ENCODE measurements at regions of chr10 and their contacts with region 1.

Region 1: GRCh38 chr10:69957886-69958555 is 94.6 kb upstream of the MACROH2A2 start:
- DNase-seq: peak; percentile 73
- H3K4me3 ChIP-seq: no peak overlapping the region
- H3K27ac ChIP-seq: no peak overlapping the region
- H3K4me1 ChIP-seq: peaks cover 0 to 5% of the 10 kb centered on the region in 2 experiments; a peak in 1 of 4 replicates
- H3K27me3 ChIP-seq: no peaks in the 10 kb centered on the region
- CTCF ChIP-seq: peak; percentile 81
- EP300 ChIP-seq: no peak
- RAD21 ChIP-seq: peak; percentile 69

Region 2: DNA sequence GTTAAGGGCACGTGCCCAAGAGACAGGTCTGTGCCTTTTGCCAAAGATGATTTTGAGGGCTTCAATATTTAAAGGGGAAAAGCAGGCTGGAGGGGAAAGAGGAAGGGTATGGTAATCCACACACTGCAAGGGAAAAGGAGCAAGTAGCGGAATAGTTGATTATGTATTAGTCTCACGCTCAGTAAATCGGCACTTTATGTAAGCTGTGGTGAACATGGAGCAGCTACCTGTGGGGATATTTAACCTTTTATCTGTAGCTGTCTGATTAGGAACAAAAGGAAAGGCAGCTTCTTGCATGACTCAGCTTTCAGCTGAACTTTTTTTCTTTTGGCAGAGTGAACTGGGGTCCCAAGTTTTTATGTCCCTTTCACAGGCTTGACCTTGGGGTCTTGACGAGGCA is 32.9 kb before region 1 on chr10:
- CTCF ChIA-PET with region 1: interaction called, 15 read pairs
- POLR2A ChIA-PET with region 1: no interaction called
- DNase-seq: no peak
- H3K4me3 ChIP-seq: no peak overlapping the region
- H3K27ac ChIP-seq: no peak overlapping the region
- H3K4me1 ChIP-seq: no peaks in the 10 kb centered on the region
- H3K27me3 ChIP-seq: no peaks in the 10 kb centered on the region
- CTCF ChIP-seq: no peak
- EP300 ChIP-seq: no peak
- RAD21 ChIP-seq: no peak

Region 3: DNA sequence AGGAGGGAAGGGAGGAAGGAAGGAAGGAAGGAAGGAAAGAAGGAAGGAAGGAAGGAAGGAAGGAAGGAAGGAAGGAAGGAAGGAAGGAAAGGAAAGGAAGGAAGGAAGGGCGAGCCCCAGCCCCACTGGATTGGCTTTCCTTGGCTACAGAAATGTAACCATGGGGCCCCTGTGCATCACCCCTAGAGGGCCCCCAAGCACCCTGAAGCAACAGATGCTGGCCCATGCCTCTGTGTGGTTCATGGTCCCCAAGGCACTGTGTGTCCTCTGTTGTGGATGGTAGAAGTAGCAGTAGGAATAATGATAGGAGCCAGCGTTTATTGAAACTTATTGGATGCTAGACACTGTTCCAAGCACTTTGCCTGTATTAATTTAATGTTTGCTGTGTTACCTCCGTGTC is 21.9 kb before region 1 on chr10:
- CTCF ChIA-PET with region 1: interaction called, 30 read pairs
- POLR2A ChIA-PET with region 1: no interaction called
- DNase-seq: no peak
- H3K4me3 ChIP-seq: no peak overlapping the region
- H3K27ac ChIP-seq: no peak overlapping the region
- H3K4me1 ChIP-seq: no peaks in the 10 kb centered on the region
- H3K27me3 ChIP-seq: no peaks in the 10 kb centered on the region
- CTCF ChIP-seq: no peak
- EP300 ChIP-seq: no peak
- RAD21 ChIP-seq: peak; percentile 23

Region 4: DNA sequence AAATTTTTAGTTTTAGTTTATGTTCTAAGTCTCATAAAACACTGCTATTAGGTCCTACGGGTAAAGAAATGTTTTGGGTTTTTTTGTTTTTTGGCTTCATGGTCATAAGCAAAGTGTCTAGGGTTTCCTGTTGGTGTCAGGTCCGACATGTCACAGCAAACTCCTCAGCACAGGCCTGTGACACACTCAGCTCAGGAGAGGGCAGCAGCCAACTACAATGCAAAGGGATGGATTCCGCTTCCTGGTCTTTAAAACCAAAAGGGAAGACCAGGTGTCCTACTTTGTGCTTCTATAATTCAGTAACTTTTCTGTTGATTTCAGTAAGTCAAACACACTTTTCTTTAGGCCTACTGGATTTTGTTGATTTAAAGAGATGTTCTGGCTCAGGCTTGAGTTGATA is 10.8 kb after region 1 on chr10:
- CTCF ChIA-PET with region 1: interaction called, 85 read pairs
- POLR2A ChIA-PET with region 1: no interaction called
- DNase-seq: peak; percentile 45
- H3K4me3 ChIP-seq: no peak overlapping the region
- H3K27ac ChIP-seq: no peak overlapping the region
- H3K4me1 ChIP-seq: peaks cover 7 to 19% of the 10 kb centered on the region in 2 experiments
- H3K27me3 ChIP-seq: no peaks in the 10 kb centered on the region
- CTCF ChIP-seq: peak; percentile 40
- EP300 ChIP-seq: no peak
- RAD21 ChIP-seq: peak; percentile 87

Region 5: GRCh38 chr10:70656489-70656888 is 698.5 kb after region 1 on chr10:
- CTCF ChIA-PET with region 1: no interaction called
- POLR2A ChIA-PET with region 1: no interaction called
- DNase-seq: no peak
- H3K4me3 ChIP-seq: no peak overlapping the region
- H3K27ac ChIP-seq: peak overlapping the region in 1 of 2 experiments; percentile 98; a peak in 3 of 4 replicates
- H3K4me1 ChIP-seq: peaks cover 9 to 10% of the 10 kb centered on the region in 2 experiments; a peak in 3 of 4 replicates
- H3K27me3 ChIP-seq: no peaks in the 10 kb centered on the region
- CTCF ChIP-seq: no peak
- EP300 ChIP-seq: peak in 1 of 2 experiments; percentile 84; a peak in 3 of 4 replicates
- RAD21 ChIP-seq: no peak

Measured in SK-N-SH (cell line).